Gastrocnemius medialis (tissue), 4 donors: ENCODE measurements at regions of chr10 and their contacts with region 1.

Region 1: GRCh38 chr10:71285180-71285545 is 33.9 kb upstream of the SLC29A3 start:
- DNase-seq: no peak
- ATAC-seq: peak; percentile 66 to 69
- H3K4me3 ChIP-seq: no peak overlapping the region
- H3K27ac ChIP-seq: no peak overlapping the region
- H3K4me1 ChIP-seq: no peaks in the 10 kb centered on the region
- H3K27me3 ChIP-seq: no peaks in the 10 kb centered on the region
- CTCF ChIP-seq: peak; percentile 69 to 89 (median 85)
- POLR2A ChIP-seq: no peak

Region 2: GRCh38 chr10:70903262-70903921 is 381.8 kb before region 1 on chr10:
- in situ Hi-C with region 1: no loop called
- intact Hi-C with region 1: loop called (anchors 1 kb)
- DNase-seq: peak; percentile 37 to 49
- ATAC-seq: peak; percentile 51 to 60
- H3K4me3 ChIP-seq: no peak overlapping the region
- H3K27ac ChIP-seq: no peak overlapping the region
- H3K4me1 ChIP-seq: peaks cover 5 to 7% of the 10 kb centered on the region in 2 donors
- H3K27me3 ChIP-seq: no peaks in the 10 kb centered on the region
- CTCF ChIP-seq: peak; percentile 56 to 87 (median 83)
- POLR2A ChIP-seq: no peak

Region 3: DNA sequence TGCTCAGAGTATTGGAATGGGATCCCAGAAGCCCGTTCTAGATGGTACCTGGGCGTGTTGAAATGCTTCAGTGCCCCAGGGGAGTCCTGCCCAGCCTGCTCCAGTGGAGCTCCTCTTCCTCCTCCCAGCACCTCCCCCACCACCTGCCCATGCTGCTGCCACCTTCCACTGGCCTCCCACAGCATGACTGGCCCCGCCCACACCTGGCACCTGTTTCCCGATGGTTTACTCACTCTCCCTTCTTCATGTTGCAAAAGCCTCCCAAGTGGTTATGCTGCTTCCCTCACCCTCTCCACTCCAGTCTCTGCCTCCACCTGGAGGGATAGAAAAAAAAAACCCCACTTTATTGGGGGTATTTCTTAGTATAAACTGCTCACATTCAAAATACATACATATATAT is 364.6 kb before region 1 on chr10:
- in situ Hi-C with region 1: loop called in 3 of 4 experiments (anchors 5 to 10 kb)
- intact Hi-C with region 1: loop called (anchors 1 kb)
- DNase-seq: no peak
- ATAC-seq: no peak
- H3K4me3 ChIP-seq: no peak overlapping the region
- H3K27ac ChIP-seq: no peak overlapping the region
- H3K4me1 ChIP-seq: no peaks in the 10 kb centered on the region
- H3K27me3 ChIP-seq: peaks cover 0 to 3% (median 0%) of the 10 kb centered on the region in 3 donors
- CTCF ChIP-seq: no peak
- POLR2A ChIP-seq: no peak

Region 4: DNA sequence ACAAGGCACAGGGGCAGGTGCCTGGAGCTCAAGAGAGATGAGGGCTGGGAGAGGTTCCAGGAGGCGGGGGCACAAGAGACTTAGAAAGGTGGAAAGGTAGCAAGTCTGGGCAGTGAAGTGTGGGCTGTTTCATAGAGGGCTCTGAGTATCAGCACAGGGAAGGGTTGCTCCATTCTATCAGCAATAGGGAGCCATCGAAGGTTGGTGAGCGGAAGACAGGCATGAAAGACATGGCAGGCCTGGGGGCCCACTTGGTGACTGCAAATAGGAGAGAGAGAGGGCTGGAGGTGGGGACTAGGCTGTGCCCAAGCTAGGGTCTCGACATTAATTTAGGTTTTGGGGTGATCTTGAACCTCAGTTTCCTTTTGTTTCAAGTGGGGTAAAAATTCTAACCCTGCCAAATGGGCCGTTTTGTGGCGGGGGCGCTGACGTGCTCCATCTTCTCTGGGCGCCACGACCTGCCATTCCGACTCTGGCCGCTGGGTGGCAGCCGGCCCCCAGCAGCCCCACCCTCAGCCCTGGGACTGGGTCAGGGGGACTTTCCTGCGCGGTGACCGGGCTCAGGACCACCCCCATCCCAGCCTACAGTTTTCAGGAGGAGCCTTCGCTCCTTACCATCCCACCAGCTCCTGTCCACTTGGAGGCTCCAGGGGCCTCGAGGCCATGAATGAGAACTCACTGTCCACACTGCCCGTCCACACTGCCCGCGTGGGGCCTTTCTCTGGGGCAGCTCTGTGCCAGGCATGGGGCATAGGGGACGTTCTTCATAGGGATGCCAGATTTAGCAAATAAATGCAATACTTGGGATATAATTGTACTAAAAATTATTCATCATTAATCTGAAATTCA is 359.6 kb before region 1 on chr10:
- in situ Hi-C with region 1: loop called (anchors 5 to 10 kb)
- intact Hi-C with region 1: loop called (anchors 1 kb)
- DNase-seq: no peak
- ATAC-seq: peak; percentile 68 to 81
- H3K4me3 ChIP-seq: no peak overlapping the region
- H3K27ac ChIP-seq: no peak overlapping the region
- H3K4me1 ChIP-seq: no peaks in the 10 kb centered on the region
- H3K27me3 ChIP-seq: no peaks in the 10 kb centered on the region
- CTCF ChIP-seq: peak; percentile 82 to 98 (median 93)
- POLR2A ChIP-seq: no peak

Region 5: GRCh38 chr10:70931168-70931815 is 353.9 kb before region 1 on chr10:
- in situ Hi-C with region 1: loop called in 3 of 4 experiments (anchors 10 kb)
- intact Hi-C with region 1: no loop called
- DNase-seq: no peak
- ATAC-seq: peak in 1 of 2 donors; percentile 50
- H3K4me3 ChIP-seq: no peak overlapping the region
- H3K27ac ChIP-seq: no peak overlapping the region
- H3K4me1 ChIP-seq: no peaks in the 10 kb centered on the region
- H3K27me3 ChIP-seq: no peaks in the 10 kb centered on the region
- CTCF ChIP-seq: no peak
- POLR2A ChIP-seq: no peak

Region 6: GRCh38 chr10:71396084-71396720 is 111.0 kb after region 1 on chr10:
- in situ Hi-C with region 1: no loop called
- intact Hi-C with region 1: no loop called
- DNase-seq: peak; percentile 36 to 43
- ATAC-seq: peak; percentile 71 to 76
- H3K4me3 ChIP-seq: peak overlapping the region; percentile 45 to 69 (median 57)
- H3K27ac ChIP-seq: peak overlapping the region in 1 of 4 donors; percentile 40
- H3K4me1 ChIP-seq: peaks cover 7 to 10% of the 10 kb centered on the region in 2 donors
- H3K27me3 ChIP-seq: peaks cover 23 to 41% (median 38%) of the 10 kb centered on the region in 3 donors
- CTCF ChIP-seq: peak; percentile 52 to 70 (median 55)
- POLR2A ChIP-seq: no peak